Body of pancreas (tissue), 4 donors: ENCODE measurements at regions of chr22 and their contacts with region 1.

Region 1: DNA sequence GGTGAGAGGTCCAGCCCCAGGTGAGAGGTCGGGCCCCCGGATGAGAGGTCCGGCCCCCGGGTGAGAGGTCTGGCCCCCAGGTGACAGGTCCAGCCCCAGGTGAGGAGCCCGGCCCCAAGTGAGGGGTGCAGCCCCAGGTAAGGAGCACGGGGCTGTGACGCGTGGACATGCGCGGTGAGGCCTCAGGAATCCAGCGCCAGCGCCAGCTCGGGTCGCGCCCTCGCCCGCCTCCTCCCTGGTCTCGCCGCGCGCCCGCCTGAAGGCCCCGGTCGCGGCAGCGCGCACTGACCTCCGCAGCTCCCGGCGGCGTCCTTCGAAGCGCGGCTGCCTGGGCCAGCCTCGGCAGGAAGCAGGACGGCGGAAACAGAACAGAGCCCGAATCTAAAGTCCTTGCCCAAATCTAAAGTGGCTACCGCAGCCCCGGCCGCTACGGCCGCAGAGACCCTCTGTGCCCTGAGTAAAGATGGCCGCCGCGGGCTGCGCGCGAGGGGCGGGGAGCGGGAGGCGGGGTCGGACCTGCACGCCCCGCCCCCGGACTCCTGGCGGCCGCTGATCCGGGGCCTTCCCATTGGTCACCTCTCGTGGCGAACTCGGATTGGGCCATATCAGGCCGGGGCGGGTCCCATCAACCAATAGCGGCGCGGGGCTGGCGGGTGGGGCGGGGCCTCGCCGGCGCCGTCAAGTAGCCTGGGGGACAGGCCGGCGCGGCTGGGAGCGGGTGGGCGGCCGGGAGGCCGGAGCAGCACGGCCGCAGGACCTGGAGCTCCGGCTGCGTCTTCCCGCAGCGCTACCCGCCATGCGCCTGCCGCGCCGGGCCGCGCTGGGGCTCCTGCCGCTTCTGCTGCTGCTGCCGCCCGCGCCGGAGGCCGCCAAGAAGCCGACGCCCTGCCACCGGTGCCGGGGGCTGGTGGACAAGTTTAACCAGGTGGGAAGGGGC is at the starts of genes ALG12 and CRELD2:
- DNase-seq: peak; percentile 98 to 99 (median 98)
- ATAC-seq: peak; percentile 98
- H3K4me3 ChIP-seq: peak within 1 kb of the TSS; percentile 55 to 76
- H3K27ac ChIP-seq: peak within 1 kb of the TSS; percentile 89 to 98 (median 93)
- H3K4me1 ChIP-seq: peaks cover 24% of the 10 kb centered on the region
- H3K27me3 ChIP-seq: no peaks in the 10 kb centered on the region
- CTCF ChIP-seq: peak in 2 of 7 experiments; percentile 13 to 24
- POLR2A ChIP-seq: peak; percentile 60 to 89 (median 61)
- total RNA-seq, gene ALG12: 16.2 to 17.9 TPM
- total RNA-seq, gene CRELD2: 73.9 to 201 TPM

Region 2: GRCh38 chr22:49693416-49693815 is 224.8 kb before region 1 on chr22:
- intact Hi-C with region 1: no loop called
- DNase-seq: no peak
- ATAC-seq: no peak
- H3K4me3 ChIP-seq: no peak overlapping the region
- H3K27ac ChIP-seq: no peak overlapping the region
- H3K4me1 ChIP-seq: no peaks in the 10 kb centered on the region
- H3K27me3 ChIP-seq: no peaks in the 10 kb centered on the region
- CTCF ChIP-seq: no peak
- POLR2A ChIP-seq: no peak

Region 3: DNA sequence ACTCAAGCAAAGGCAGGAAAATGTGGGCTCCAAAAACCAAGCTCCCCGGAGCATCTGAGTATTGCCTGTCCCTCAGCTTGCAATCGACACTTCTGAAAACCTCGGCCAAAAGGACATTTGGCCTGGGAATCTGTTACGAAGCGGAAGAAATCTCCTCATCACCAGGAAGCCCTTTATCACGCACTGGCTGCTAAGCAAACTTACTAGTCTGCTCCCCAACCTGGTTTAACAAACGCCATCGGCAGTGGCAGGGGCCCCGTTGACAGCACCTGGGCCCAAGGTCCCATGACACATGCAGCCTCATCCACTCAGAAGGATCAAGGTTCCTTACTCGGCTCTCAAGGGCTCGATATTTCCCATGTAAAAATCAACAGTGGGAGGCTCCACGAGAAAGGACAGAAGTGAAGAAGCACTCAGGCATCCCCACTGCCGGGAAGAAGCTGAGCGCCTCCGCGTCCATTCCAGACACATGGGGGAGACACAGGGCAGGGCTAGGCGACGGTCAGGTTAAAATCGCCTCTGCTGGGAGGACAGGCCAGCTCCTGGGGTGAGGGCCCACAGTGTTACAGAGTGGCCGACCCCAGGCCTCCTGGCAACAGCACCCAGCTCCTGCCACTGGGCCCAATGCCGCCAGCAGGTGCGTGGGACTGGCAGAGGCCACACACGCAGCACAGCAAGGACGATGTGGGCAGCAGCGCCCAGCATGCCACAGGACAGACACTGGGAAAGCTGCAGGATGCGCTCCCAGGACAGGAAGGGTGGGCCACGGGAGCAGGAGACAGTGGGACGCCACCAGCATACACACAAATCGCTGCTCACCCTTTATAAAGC is 117.6 kb before region 1 on chr22:
- intact Hi-C with region 1: no loop called
- DNase-seq: no peak
- ATAC-seq: no peak
- H3K4me3 ChIP-seq: no peak overlapping the region
- H3K27ac ChIP-seq: no peak overlapping the region
- H3K4me1 ChIP-seq: peaks cover 13% of the 10 kb centered on the region
- H3K27me3 ChIP-seq: no peaks in the 10 kb centered on the region
- CTCF ChIP-seq: peak in 1 of 7 experiments; percentile 20
- POLR2A ChIP-seq: no peak

Region 4: DNA sequence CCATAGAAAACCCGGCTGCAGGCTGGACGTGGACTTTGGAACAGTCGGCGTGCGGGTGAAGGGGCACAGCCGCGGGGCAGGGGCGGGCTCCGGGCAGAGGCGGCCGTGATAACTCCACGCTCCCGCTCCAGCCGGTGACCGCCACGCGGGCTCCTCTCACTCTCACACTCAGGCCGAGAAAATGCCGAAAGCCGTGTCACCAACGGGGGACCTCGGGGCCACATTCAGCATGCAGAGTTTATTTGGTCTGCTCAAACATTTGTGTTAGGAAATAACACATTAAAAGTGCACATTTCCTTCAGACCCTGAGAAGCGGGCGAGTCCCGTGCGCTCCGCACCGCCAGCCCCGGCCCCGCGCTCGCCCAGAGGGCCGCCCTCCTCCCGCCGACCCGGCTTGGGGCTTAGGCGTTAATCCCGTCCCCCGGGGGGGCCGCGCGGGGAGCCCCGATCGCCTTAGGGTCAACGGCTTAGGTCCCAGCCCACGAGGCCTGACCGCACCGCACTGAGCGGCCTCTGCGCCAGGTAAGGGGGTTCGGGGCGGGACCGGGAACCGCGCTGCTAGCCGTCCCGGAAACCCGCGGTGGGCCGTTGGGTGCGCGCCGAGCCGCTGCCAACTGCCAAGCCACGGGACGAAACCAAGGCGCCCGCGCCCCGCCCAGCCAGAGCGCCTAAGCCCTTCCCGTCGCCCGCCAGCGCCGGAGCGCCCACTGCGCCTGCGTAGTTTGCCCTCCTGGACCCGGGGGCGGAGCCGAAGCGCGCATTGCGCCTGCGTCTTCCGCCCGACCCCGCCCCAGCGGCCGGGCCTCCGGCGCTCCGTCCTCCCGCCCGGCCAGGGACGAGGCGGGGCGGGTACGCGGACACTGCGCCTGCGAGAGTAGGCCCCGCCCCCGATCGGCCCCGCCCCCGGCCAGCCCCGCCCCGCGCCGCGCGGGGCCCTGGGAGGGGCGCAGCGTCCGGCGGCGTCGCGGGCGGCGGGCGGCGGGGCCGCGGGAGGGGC is 65.0 kb before region 1 on chr22 and contains the start of gene ZBED4:
- intact Hi-C with region 1: loop called (anchors 10 kb)
- DNase-seq: peak; percentile 98 to 99 (median 99)
- ATAC-seq: peak; percentile 89
- H3K4me3 ChIP-seq: peak within 1 kb of the TSS; percentile 21 to 41
- H3K27ac ChIP-seq: peak within 1 kb of the TSS; percentile 95 to 99 (median 98)
- H3K4me1 ChIP-seq: peaks cover 63% of the 10 kb centered on the region
- H3K27me3 ChIP-seq: peaks cover 0 to 11% of the 10 kb centered on the region in 2 donors
- CTCF ChIP-seq: no peak
- POLR2A ChIP-seq: peak; percentile 90 to 92 (median 91)
- total RNA-seq, gene ZBED4: 9.6 to 17.1 TPM